ENCODE measurements at regions of chr10 and their contacts with region 1.

Region 1: DNA sequence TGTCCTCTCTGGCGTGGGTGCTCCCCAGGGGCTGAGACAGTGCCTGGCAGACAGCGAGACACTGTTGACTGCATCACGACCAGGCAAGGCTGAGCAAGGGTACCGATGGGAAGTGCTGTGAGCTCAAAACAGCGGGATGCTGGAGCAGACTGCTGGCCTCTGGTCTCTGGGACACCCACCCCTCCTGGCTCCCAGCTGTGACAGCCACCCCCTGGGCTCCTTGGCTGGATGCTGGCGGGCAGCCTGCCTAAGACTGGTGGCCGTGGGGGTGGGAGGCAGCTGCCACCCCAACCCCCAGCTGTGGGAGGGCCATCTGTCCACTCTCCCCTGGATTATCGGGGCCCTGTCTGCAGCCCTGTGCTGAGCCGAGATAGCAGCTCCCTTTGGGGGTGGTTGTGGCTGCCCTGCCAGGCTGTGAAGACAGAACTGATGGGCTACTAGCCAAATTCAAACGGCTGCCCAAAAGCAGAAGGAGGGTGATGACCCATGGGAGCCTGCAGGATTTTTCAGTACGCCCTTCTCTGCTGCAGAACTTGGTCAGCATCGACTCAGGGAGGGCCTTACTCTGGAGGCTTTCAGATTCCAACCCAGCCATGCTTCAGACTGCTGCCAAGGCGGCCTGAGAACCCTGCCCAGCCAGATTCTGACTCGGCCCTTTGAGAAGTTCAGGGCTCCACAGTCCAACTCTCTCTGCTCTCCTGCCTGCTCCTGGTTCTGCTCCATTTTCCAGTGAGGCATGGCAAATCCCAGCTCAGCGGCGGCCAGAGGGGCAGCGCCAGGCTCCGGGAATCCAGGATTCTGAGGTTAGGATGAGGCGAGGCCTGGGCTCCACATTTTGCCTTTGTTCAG is 125.3 kb downstream of the NEURL1 start:
- DNase-seq: no peak
- H3K4me3 ChIP-seq: no peak overlapping the region
- H3K27ac ChIP-seq: peak overlapping the region; percentile 83
- H3K4me1 ChIP-seq: peaks cover 97% of the 10 kb centered on the region
- H3K27me3 ChIP-seq: no peaks in the 10 kb centered on the region
- CTCF ChIP-seq: no peak
- POLR2A ChIP-seq: no peak

Region 2: DNA sequence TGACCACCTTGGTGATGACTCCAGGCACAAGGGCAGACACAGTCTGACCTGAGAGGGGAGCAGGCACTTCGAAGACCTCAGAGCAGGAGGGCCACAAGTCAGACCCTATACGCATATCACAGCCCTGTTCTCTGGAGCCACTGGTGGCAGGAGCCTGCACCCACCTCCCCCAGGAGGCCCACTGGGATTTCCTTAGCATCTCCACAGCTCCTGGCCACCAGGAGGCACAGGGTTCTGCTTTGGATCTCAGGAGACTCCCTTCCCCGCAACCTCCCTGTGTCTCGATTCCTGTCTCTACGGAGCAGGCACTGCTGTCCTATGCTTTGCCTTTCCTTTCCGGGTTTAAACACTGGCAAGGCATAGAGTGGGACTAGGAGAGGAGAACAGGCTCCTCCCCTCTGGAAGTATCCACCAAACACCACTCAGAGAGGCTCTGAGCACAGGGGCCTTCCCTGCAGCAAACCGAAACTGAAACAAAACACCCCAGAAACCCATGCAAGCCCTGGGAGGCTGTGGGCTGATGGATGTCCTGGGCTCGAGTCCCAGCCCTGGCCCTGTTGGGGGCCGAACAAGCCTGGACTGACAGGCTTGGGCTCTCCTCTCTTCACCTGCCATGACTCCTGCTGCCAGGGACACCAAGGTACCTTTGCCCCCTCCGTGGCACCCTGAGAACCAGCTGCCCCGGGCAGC is 41.0 kb after region 1 on chr10:
- intact Hi-C with region 1: loop called (anchors 1 kb)
- DNase-seq: no peak
- H3K4me3 ChIP-seq: peak overlapping the region; percentile 64 to 68
- H3K27ac ChIP-seq: peak overlapping the region; percentile 98
- H3K4me1 ChIP-seq: peaks cover 66% of the 10 kb centered on the region
- H3K27me3 ChIP-seq: no peaks in the 10 kb centered on the region
- CTCF ChIP-seq: peak in 1 of 3 experiments; percentile 4
- POLR2A ChIP-seq: no peak

Region 3: DNA sequence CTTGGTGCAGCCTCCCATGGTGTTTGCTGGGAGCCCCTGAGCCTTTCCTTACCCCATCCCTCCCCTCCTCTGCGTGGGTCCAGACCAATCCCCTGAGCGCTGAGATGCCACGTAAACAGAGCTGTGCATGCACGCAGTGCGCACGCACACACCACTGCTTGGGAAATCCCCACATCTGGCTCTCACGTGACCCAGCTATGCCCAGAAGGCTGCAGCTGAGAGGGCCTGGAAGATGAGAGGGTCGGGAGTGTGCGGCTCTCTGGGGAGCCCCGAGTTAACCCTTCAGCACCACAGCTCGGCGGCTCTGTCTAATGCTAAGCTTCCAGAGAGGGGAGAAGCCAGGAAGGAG is 59.4 kb after region 1 on chr10:
- intact Hi-C with region 1: loop called (anchors 5 kb)
- DNase-seq: no peak
- H3K4me3 ChIP-seq: peak overlapping the region; percentile 36 to 44
- H3K27ac ChIP-seq: peak overlapping the region; percentile 94
- H3K4me1 ChIP-seq: peaks cover 63% of the 10 kb centered on the region
- H3K27me3 ChIP-seq: no peaks in the 10 kb centered on the region
- CTCF ChIP-seq: no peak
- POLR2A ChIP-seq: peak in 1 of 2 donors; percentile 72